ENCODE measurements at regions of chr12 and their contacts with region 1.

Region 1: DNA sequence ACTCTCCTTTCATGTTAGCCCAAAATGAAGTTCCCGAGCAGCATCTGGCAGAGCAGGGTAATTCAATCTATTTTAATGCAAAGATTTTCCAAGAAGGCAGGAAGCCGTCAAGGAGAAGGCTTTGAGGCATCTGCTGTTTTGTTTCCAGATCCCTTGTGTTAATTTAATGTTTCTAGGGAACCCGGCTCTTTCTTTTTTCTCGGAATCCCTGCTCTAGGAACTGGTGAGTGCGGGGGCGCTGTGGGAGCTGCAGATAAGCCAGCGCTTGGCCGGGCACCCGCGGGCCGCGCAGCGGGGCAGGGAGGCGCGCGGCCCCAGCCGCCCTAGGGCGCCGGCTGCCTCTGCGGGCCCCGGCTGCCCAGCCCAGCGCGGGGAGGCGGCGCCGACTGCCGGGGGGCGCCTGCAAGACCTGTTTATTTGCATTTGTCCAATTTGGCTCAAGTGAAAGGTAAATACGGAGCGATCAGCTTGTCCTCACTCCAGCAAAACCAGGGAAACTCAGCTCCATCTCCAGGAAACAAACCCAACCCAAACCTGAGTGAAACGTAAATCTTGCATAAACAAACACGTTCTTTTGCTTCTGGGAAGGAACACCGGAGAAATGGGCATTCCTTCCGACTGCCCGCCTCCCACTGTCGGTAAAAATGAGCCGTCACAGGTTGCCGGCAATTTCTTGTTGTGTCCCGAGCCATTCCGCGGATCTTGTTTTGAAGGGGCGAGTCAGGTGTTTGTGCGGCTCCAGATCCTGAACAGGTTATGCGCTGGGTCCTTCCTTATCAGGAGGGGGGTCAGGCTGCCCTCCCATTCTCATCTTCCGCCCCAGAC is 65.1 kb downstream of the CRADD start:
- DNase-seq: peak; percentile 73
- ATAC-seq: peak; percentile 94
- H3K4me3 ChIP-seq: peak overlapping the region; percentile 59 to 93 (median 86)
- H3K4me3 Mint-ChIP-seq: peak overlapping the region; percentile 92
- H3K27ac ChIP-seq: peak overlapping the region; percentile 48 to 68
- H3K27ac Mint-ChIP-seq: peak overlapping the region; percentile 78
- H3K4me1 ChIP-seq: peaks cover 8 to 15% of the 10 kb centered on the region in 2 donors
- H3K4me1 Mint-ChIP-seq: peaks cover 29% of the 10 kb centered on the region
- H3K27me3 ChIP-seq: no peaks in the 10 kb centered on the region
- H3K27me3 Mint-ChIP-seq: no peaks in the 10 kb centered on the region
- CTCF ChIP-seq: peak; percentile 26

Region 2: DNA sequence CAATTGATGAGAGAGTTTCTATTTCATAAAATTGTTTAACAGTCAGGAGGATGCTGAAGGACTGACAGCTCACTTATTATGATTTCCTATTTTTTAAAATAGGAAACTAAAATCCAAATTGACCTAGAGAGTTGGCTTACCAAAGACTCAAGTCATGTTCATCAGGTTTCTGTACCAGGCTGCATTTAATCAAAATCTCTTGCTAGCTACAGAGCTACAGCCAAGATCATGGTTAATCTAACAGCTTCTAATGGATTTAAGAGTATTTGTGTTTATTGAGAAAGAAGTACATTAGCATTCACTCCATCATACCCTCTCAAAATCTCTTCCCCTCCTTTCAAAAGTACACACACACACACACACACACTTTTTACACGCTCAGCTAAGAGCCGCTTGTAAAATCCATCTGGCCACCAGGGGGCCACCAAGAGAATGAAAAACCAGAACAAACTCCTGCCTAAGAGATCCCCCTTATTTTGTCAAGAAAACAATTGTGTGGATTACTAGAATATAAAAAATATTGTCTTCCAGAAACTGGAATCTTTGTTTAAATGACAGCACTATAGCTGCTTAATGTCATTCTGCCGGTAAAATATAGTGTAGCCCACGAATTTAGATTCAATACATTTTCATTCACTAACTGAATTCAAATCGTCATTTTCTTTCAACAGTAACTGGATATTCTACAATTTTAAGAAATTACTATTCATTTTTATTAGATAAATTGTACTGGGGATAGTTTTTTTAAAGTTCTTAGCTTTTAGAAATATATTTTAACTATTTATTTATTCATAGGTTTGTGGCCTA is 1930.6 kb before region 1 on chr12:
- CTCF ChIA-PET with region 1: no interaction called
- POLR2A ChIA-PET with region 1: no interaction called
- intact Hi-C with region 1: no loop called
- DNase-seq: peak; percentile 80
- ATAC-seq: peak; percentile 71
- H3K4me3 ChIP-seq: no peak overlapping the region
- H3K4me3 Mint-ChIP-seq: no peak overlapping the region
- H3K27ac ChIP-seq: no peak overlapping the region
- H3K27ac Mint-ChIP-seq: peak overlapping the region; percentile 43
- H3K4me1 ChIP-seq: peaks cover 0 to 5% of the 10 kb centered on the region in 2 donors
- H3K4me1 Mint-ChIP-seq: peaks cover 4% of the 10 kb centered on the region
- H3K27me3 ChIP-seq: no peaks in the 10 kb centered on the region
- H3K27me3 Mint-ChIP-seq: no peaks in the 10 kb centered on the region
- CTCF ChIP-seq: peak; percentile 90

Region 3: GRCh38 chr12:93378373-93379325 is 363.7 kb before region 1 on chr12:
- CTCF ChIA-PET with region 1: no interaction called
- POLR2A ChIA-PET with region 1: no interaction called
- intact Hi-C with region 1: loop called (anchors 5 kb)
- DNase-seq: peak; percentile 76
- ATAC-seq: peak; percentile 44
- H3K4me3 ChIP-seq: peak overlapping the region; percentile 73 to 96 (median 86)
- H3K4me3 Mint-ChIP-seq: peak overlapping the region; percentile 98
- H3K27ac ChIP-seq: peak overlapping the region; percentile 75 to 89
- H3K27ac Mint-ChIP-seq: peak overlapping the region; percentile 98
- H3K4me1 ChIP-seq: peaks cover 20 to 29% of the 10 kb centered on the region in 2 donors
- H3K4me1 Mint-ChIP-seq: peaks cover 40% of the 10 kb centered on the region
- H3K27me3 ChIP-seq: no peaks in the 10 kb centered on the region
- H3K27me3 Mint-ChIP-seq: no peaks in the 10 kb centered on the region
- CTCF ChIP-seq: no peak

Region 4: GRCh38 chr12:93467351-93468007 is 274.8 kb before region 1 on chr12 and contains the start of gene MRPL42:
- CTCF ChIA-PET with region 1: no interaction called
- POLR2A ChIA-PET with region 1: no interaction called
- intact Hi-C with region 1: loop called (anchors 1 kb)
- DNase-seq: peak; percentile 95
- ATAC-seq: peak; percentile 93
- H3K4me3 ChIP-seq: peak within 1 kb of the TSS; percentile 64 to 82 (median 78)
- H3K4me3 Mint-ChIP-seq: peak within 1 kb of the TSS; percentile 95
- H3K27ac ChIP-seq: peak within 1 kb of the TSS; percentile 60 to 80
- H3K27ac Mint-ChIP-seq: peak within 1 kb of the TSS; percentile 95
- H3K4me1 ChIP-seq: peaks cover 12 to 17% of the 10 kb centered on the region in 2 donors
- H3K4me1 Mint-ChIP-seq: peaks cover 28% of the 10 kb centered on the region
- H3K27me3 ChIP-seq: no peaks in the 10 kb centered on the region
- H3K27me3 Mint-ChIP-seq: no peaks in the 10 kb centered on the region
- CTCF ChIP-seq: peak; percentile 83
- total RNA-seq, gene MRPL42: 41.9 and 45.2 TPM in 2 replicates